ENCODE measurements at regions of chr20 and their contacts with region 1.

Region 1: GRCh38 chr20:52305858-52306257 is 114.3 kb upstream of the ZFP64 start:
- DNase-seq: peak in 13 of 14 experiments; percentile 3 to 63 (median 16)
- ATAC-seq: peak; percentile 78
- H3K4me3 ChIP-seq: no peak overlapping the region
- H3K4me3 Mint-ChIP-seq: peak overlapping the region; percentile 39
- H3K27ac ChIP-seq: no peak overlapping the region
- H3K27ac Mint-ChIP-seq: peak overlapping the region; percentile 65
- H3K4me1 ChIP-seq: peaks cover 22% of the 10 kb centered on the region
- H3K4me1 Mint-ChIP-seq: peaks cover 60% of the 10 kb centered on the region
- H3K27me3 ChIP-seq: no peaks in the 10 kb centered on the region
- H3K27me3 Mint-ChIP-seq: no peaks in the 10 kb centered on the region
- CTCF ChIP-seq: no peak

Region 2: DNA sequence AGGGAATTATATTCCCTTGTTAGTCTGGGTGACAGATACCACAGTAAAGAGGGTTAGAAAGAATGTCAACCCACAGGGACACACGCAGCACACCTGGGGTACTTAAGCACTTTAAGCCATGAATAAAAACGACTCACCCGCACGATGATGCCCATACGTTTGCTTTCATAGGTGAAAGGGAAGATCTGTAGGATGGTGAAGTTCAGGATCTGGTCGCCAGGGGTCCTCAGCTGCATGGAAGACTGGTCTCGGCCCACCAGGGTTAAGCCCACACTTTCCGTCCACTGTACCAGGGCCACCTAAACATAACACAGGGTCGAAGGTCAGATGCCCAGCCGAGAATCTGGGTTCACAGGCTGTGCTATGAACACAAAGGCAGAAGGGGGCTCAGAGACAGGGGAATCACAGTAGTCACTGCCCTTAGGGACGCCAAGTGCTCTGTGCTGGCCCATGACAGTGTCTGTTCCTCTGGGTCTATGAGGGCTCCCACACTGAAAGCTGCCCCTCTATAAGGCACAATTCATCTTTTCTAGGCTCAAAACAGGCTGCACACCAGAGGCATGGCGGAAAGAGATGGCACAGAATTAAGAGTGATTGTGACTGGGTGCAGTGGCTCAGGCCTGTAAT is 666.5 kb before region 1 on chr20:
- CTCF ChIA-PET with region 1: no interaction called
- POLR2A ChIA-PET with region 1: no interaction called
- intact Hi-C with region 1: loop called in 1 of 2 experiments (anchors 5 kb)
- DNase-seq: peak; percentile 15 to 64 (median 30)
- ATAC-seq: no peak
- H3K4me3 ChIP-seq: no peak overlapping the region
- H3K4me3 Mint-ChIP-seq: no peak overlapping the region
- H3K27ac ChIP-seq: no peak overlapping the region
- H3K27ac Mint-ChIP-seq: no peak overlapping the region
- H3K4me1 ChIP-seq: no peaks in the 10 kb centered on the region
- H3K4me1 Mint-ChIP-seq: no peaks in the 10 kb centered on the region
- H3K27me3 ChIP-seq: peaks cover 0 to 4% of the 10 kb centered on the region in 2 experiments
- H3K27me3 Mint-ChIP-seq: peaks cover 8% of the 10 kb centered on the region
- CTCF ChIP-seq: peak; percentile 52

Region 3: GRCh38 chr20:52295556-52295955 is 10.3 kb before region 1 on chr20:
- CTCF ChIA-PET with region 1: no interaction called
- POLR2A ChIA-PET with region 1: no interaction called
- intact Hi-C with region 1: no loop called
- DNase-seq: no peak
- ATAC-seq: no peak
- H3K4me3 ChIP-seq: no peak overlapping the region
- H3K4me3 Mint-ChIP-seq: no peak overlapping the region
- H3K27ac ChIP-seq: no peak overlapping the region
- H3K27ac Mint-ChIP-seq: no peak overlapping the region
- H3K4me1 ChIP-seq: no peaks in the 10 kb centered on the region
- H3K4me1 Mint-ChIP-seq: no peaks in the 10 kb centered on the region
- H3K27me3 ChIP-seq: no peaks in the 10 kb centered on the region
- H3K27me3 Mint-ChIP-seq: no peaks in the 10 kb centered on the region
- CTCF ChIP-seq: no peak

Region 4: DNA sequence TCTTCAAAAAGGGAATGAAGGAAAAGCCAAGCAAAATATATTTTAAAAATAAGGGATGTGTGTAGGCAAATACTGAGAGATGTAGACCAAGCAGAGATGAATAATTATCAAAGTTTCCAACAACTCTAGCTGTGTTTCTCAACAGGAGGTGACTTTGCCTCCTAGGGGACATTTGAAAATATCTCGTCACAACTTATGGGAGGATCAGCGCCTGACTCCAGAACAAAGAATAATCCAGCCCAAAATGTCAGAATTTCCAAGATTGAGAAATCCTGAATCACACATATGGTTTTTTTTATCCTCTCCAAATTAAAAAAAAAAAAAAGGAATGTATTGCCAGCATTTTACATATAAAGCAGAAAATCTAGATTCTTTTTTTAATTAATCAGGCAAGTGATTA is 126.9 kb after region 1 on chr20:
- CTCF ChIA-PET with region 1: no interaction called
- POLR2A ChIA-PET with region 1: no interaction called
- intact Hi-C with region 1: no loop called
- DNase-seq: no peak
- ATAC-seq: no peak
- H3K4me3 ChIP-seq: no peak overlapping the region
- H3K4me3 Mint-ChIP-seq: no peak overlapping the region
- H3K27ac ChIP-seq: no peak overlapping the region
- H3K27ac Mint-ChIP-seq: no peak overlapping the region
- H3K4me1 ChIP-seq: no peaks in the 10 kb centered on the region
- H3K4me1 Mint-ChIP-seq: no peaks in the 10 kb centered on the region
- H3K27me3 ChIP-seq: no peaks in the 10 kb centered on the region
- H3K27me3 Mint-ChIP-seq: no peaks in the 10 kb centered on the region
- CTCF ChIP-seq: no peak

Region 5: GRCh38 chr20:52965380-52965779 is 659.5 kb after region 1 on chr20:
- CTCF ChIA-PET with region 1: no interaction called
- POLR2A ChIA-PET with region 1: no interaction called
- intact Hi-C with region 1: loop called in 1 of 2 experiments (anchors 10 kb)
- DNase-seq: no peak
- ATAC-seq: no peak
- H3K4me3 ChIP-seq: no peak overlapping the region
- H3K4me3 Mint-ChIP-seq: no peak overlapping the region
- H3K27ac ChIP-seq: no peak overlapping the region
- H3K27ac Mint-ChIP-seq: no peak overlapping the region
- H3K4me1 ChIP-seq: no peaks in the 10 kb centered on the region
- H3K4me1 Mint-ChIP-seq: peaks cover 8% of the 10 kb centered on the region
- H3K27me3 ChIP-seq: peaks cover 0 to 3% of the 10 kb centered on the region in 2 experiments
- H3K27me3 Mint-ChIP-seq: peaks cover 8% of the 10 kb centered on the region
- CTCF ChIP-seq: no peak

Measured in CD4-positive, alpha-beta T cell (primary cell).